Activated B cell treated with CpG ODN at 0.5 μM for 24 hours (primary cell): ENCODE measurements at regions of chr4 and their contacts with region 1.

Region 1: DNA sequence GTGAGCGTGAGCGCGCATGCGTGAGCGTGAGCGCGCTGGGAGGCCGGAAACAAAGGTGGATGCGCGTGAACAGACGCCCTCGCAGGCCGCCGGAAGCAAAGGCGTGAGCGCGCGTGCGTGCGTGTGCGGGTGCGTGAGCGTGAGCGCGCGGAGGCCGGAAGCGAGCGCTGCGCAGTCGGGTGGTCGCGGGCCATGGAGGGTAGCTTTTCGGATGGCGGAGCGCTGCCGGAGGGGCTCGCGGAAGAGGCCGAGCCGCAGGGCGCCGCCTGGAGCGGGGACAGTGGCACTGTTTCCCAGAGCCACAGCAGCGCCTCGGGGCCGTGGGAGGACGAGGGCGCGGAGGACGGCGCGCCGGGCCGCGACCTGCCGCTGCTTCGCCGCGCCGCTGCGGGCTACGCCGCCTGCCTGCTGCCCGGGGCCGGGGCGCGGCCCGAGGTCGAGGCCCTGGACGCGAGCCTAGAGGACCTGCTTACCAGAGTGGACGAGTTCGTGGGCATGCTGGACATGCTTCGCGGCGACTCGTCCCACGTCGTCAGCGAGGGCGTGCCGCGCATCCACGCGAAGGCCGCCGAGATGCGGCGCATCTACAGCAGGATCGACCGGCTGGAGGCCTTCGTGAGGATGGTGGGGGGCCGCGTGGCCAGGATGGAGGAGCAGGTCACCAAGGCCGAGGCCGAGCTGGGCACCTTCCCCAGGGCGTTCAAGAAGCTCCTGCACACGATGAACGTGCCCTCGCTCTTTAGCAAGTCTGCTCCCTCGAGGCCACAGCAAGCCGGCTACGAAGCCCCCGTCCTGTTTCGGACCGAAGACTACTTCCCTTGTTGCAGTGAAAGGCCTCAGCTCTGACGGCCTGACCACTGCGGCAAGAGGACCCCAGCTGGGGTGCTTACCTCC is at the start of gene BLOC1S4:
- DNase-seq: peak; percentile 87
- ATAC-seq: peak; percentile 85
- H3K4me3 Mint-ChIP-seq: peak within 1 kb of the TSS; percentile 91
- H3K27ac Mint-ChIP-seq: peak within 1 kb of the TSS; percentile 96
- H3K4me1 Mint-ChIP-seq: peaks cover 39% of the 10 kb centered on the region
- H3K27me3 Mint-ChIP-seq: peaks cover 3% of the 10 kb centered on the region
- CTCF ChIP-seq: no peak
- total RNA-seq, gene BLOC1S4: 19.8 and 20.3 TPM in 2 replicates

Region 2: DNA sequence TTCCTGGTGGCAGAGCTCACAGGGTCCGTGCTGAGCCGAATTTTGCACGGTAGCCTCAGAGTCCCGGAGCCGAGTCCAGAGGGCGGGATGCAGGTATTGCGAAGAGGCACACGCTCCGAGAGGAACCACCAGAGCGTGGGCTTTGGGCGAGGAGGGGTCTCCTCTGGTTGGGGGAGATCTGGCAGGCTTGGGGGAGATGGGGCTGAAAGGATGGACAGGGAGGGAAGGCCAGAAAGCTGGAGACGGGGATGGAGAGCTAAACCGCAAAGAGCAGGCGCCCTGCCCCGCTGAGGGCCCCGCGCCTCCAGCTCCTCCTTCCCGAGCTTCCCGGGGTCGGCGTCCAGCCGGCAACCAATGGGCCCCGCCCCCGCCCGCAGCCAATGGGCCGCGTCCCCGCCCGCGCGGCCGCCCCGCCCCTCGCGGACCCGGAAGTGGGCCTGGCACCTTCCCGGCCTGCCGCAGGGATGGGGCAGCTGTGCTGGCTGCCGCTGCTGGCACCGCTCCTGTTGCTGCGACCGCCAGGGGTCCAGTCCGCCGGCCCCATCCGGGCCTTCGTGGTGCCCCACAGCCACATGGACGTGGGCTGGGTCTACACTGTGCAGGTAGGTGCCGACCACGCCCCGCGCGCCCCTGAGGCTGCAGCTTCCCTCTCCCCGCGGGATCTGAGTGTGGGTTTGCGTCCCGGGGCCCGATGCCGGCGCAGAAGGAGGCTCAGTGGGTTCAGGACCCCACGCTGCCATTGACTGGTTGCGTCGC is 141.3 kb before region 1 on chr4 and contains the start of gene MAN2B2:
- CTCF ChIA-PET with region 1: no interaction called
- POLR2A ChIA-PET with region 1: interaction called, 6 read pairs
- intact Hi-C with region 1: loop called (anchors 2 kb)
- DNase-seq: peak; percentile 86
- ATAC-seq: peak; percentile 96
- H3K4me3 Mint-ChIP-seq: peak within 1 kb of the TSS; percentile 88
- H3K27ac Mint-ChIP-seq: peak within 1 kb of the TSS; percentile 74
- H3K4me1 Mint-ChIP-seq: peaks cover 14% of the 10 kb centered on the region
- H3K27me3 Mint-ChIP-seq: no peaks in the 10 kb centered on the region
- CTCF ChIP-seq: no peak
- total RNA-seq, gene MAN2B2: 24.2 and 24.7 TPM in 2 replicates

Region 3: GRCh38 chr4:6673660-6674499 is 42.4 kb before region 1 on chr4:
- CTCF ChIA-PET with region 1: no interaction called
- POLR2A ChIA-PET with region 1: interaction called, 32 read pairs
- intact Hi-C with region 1: loop called (anchors 1 kb)
- DNase-seq: peak; percentile 93
- ATAC-seq: peak; percentile 88
- H3K4me3 Mint-ChIP-seq: peak overlapping the region; percentile 91
- H3K27ac Mint-ChIP-seq: peak overlapping the region; percentile 96
- H3K4me1 Mint-ChIP-seq: peaks cover 55% of the 10 kb centered on the region
- H3K27me3 Mint-ChIP-seq: no peaks in the 10 kb centered on the region
- CTCF ChIP-seq: no peak

Region 4: DNA sequence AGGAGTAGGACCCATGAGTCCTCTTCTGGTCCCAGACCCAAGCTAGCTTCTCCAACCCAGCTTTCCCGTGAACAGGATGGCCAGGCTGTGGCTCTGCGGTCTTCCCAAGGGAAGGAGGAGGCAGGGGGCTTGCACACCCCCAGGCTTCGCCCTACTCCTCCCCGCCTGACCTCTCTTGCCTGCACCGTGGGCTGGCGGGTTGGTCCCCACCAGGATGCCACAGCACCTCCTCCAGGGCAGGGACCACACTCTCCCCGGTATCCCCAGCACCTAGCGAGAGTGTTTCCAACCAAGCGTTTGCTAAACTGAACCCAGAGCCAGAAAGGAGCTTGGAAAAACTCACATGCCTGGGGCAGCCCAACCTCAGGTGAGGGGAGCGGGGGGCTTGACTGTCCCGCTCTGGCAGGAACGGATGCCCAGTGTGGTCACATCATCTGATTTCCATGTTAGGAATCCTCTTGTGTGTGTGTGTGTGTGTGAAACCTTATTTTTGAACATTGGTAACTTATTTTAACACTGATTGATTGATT is 31.5 kb before region 1 on chr4:
- CTCF ChIA-PET with region 1: no interaction called
- POLR2A ChIA-PET with region 1: no interaction called
- intact Hi-C with region 1: no loop called
- DNase-seq: no peak
- ATAC-seq: no peak
- H3K4me3 Mint-ChIP-seq: no peak overlapping the region
- H3K27ac Mint-ChIP-seq: no peak overlapping the region
- H3K4me1 Mint-ChIP-seq: no peaks in the 10 kb centered on the region
- H3K27me3 Mint-ChIP-seq: peaks cover 3% of the 10 kb centered on the region
- CTCF ChIP-seq: no peak

Region 5: GRCh38 chr4:6695660-6696630 is 20.3 kb before region 1 on chr4:
- CTCF ChIA-PET with region 1: no interaction called
- POLR2A ChIA-PET with region 1: no interaction called
- intact Hi-C with region 1: no loop called
- DNase-seq: no peak
- ATAC-seq: no peak
- H3K4me3 Mint-ChIP-seq: no peak overlapping the region
- H3K27ac Mint-ChIP-seq: no peak overlapping the region
- H3K4me1 Mint-ChIP-seq: peaks cover 10% of the 10 kb centered on the region
- H3K27me3 Mint-ChIP-seq: no peaks in the 10 kb centered on the region
- CTCF ChIP-seq: no peak

Region 6: GRCh38 chr4:6909073-6909965 is 193.1 kb after region 1 on chr4 and contains the start of gene TBC1D14:
- CTCF ChIA-PET with region 1: interaction called, 3 read pairs
- POLR2A ChIA-PET with region 1: interaction called, 10 read pairs
- intact Hi-C with region 1: no loop called
- DNase-seq: peak; percentile 88
- ATAC-seq: peak; percentile 89
- H3K4me3 Mint-ChIP-seq: peak within 1 kb of the TSS; percentile 87
- H3K27ac Mint-ChIP-seq: peak within 1 kb of the TSS; percentile 86
- H3K4me1 Mint-ChIP-seq: peaks cover 43% of the 10 kb centered on the region
- H3K27me3 Mint-ChIP-seq: peaks cover 5% of the 10 kb centered on the region
- CTCF ChIP-seq: no peak
- total RNA-seq, gene TBC1D14: 35.1 and 35.2 TPM in 2 replicates

Region 7: GRCh38 chr4:7042697-7043464 is 326.6 kb after region 1 on chr4 and contains the start of gene TADA2B:
- CTCF ChIA-PET with region 1: no interaction called
- POLR2A ChIA-PET with region 1: interaction called, 6 read pairs
- intact Hi-C with region 1: loop called (anchors 1 kb)
- DNase-seq: peak; percentile 96
- ATAC-seq: peak; percentile 87
- H3K4me3 Mint-ChIP-seq: peak within 1 kb of the TSS; percentile 93
- H3K27ac Mint-ChIP-seq: peak within 1 kb of the TSS; percentile 85
- H3K4me1 Mint-ChIP-seq: peaks cover 54% of the 10 kb centered on the region
- H3K27me3 Mint-ChIP-seq: no peaks in the 10 kb centered on the region
- CTCF ChIP-seq: no peak
- total RNA-seq, gene TADA2B: 26.7 and 31.8 TPM in 2 replicates

Region 8: DNA sequence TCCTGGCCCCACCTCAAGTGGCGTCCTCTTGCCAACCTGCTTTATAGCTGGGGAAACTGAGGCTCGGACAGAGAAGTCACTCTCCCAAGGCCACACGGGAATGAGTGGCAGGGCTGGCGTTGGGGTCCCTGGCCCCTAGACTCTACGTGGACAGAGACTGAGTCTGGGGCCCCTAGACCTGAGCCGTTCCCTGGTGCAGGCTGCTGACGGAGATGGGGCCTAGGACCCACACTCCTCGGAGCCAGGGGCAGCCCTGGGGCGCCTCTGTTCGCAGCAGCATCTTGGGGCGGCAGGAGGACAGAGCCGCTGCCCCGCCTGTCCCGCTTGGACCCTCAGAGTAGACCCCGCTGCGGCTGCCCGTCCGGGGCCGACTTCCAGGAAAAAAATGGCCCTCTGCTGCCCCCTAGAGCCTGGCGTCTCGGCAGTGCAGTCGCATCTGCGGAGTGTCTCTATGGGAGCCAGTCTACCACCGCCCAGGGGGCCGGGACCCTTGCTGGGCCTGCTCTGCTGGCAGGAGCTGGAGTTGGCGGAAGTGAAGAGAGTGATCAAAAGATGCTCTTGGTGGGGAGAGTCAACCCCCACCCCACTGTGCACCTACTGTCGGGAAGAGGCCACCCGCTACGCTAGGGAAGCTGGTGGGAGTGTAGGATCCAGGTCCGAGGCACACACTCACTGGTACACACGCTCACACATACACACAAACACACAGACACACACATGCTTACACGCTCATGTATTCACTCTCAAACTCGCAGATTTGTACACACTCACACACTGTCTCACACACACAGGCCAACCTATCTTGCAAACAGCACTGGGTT is 1003.3 kb after region 1 on chr4:
- CTCF ChIA-PET with region 1: no interaction called
- POLR2A ChIA-PET with region 1: no interaction called
- intact Hi-C with region 1: loop called (anchors 5 kb)
- DNase-seq: no peak
- ATAC-seq: no peak
- H3K4me3 Mint-ChIP-seq: no peak overlapping the region
- H3K27ac Mint-ChIP-seq: no peak overlapping the region
- H3K4me1 Mint-ChIP-seq: no peaks in the 10 kb centered on the region
- H3K27me3 Mint-ChIP-seq: peaks cover 10% of the 10 kb centered on the region
- CTCF ChIP-seq: no peak